ENCODE measurements at regions of chr2 and their contacts with region 1.

Region 1: GRCh38 chr2:134918526-134919340 is at the start of gene CCNT2:
- H3K4me3 Mint-ChIP-seq: peak within 1 kb of the TSS; percentile 98
- H3K27ac Mint-ChIP-seq: peak within 1 kb of the TSS; percentile 99
- H3K4me1 Mint-ChIP-seq: peaks cover 18% of the 10 kb centered on the region
- H3K27me3 Mint-ChIP-seq: no peaks in the 10 kb centered on the region

Region 2: GRCh38 chr2:134739879-134740301 is 178.8 kb before region 1 on chr2:
- intact Hi-C with region 1: loop called (anchors 10 kb)
- H3K4me3 Mint-ChIP-seq: no peak overlapping the region
- H3K27ac Mint-ChIP-seq: peak overlapping the region; percentile 65
- H3K4me1 Mint-ChIP-seq: peaks cover 59% of the 10 kb centered on the region
- H3K27me3 Mint-ChIP-seq: peaks cover 18% of the 10 kb centered on the region

Region 3: GRCh38 chr2:134943540-134943939 is 24.8 kb after region 1 on chr2:
- intact Hi-C with region 1: loop called (anchors 2 kb)
- H3K4me3 Mint-ChIP-seq: no peak overlapping the region
- H3K27ac Mint-ChIP-seq: peak overlapping the region; percentile 79
- H3K4me1 Mint-ChIP-seq: peaks cover 19% of the 10 kb centered on the region
- H3K27me3 Mint-ChIP-seq: no peaks in the 10 kb centered on the region

Region 4: GRCh38 chr2:135052042-135052876 is 133.5 kb after region 1 on chr2 and contains the start of gene RAB3GAP1:
- intact Hi-C with region 1: loop called (anchors 10 kb)
- H3K4me3 Mint-ChIP-seq: peak within 1 kb of the TSS; percentile 96
- H3K27ac Mint-ChIP-seq: peak within 1 kb of the TSS; percentile 100
- H3K4me1 Mint-ChIP-seq: peaks cover 28% of the 10 kb centered on the region
- H3K27me3 Mint-ChIP-seq: no peaks in the 10 kb centered on the region

Region 5: DNA sequence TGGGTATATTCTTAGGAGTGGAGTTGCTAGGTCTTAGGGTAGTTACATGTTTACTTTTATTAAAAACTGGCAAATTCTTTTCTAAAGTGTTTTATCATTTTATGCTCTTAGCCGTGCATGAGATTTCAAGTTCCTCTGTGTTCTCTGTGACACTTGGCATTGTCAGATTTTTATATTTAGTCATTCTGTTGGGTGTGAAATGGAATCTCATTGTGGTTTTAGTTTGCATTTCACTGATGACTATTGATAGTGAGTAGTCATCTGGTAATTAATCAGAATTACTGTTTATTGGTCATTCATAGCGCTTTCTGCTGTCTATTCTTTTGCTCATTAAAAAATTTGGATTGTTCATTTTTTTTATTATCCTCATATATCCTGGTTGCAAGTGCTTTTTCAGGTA is 167.5 kb after region 1 on chr2:
- intact Hi-C with region 1: no loop called
- H3K4me3 Mint-ChIP-seq: no peak overlapping the region
- H3K27ac Mint-ChIP-seq: no peak overlapping the region
- H3K4me1 Mint-ChIP-seq: peaks cover 13% of the 10 kb centered on the region
- H3K27me3 Mint-ChIP-seq: no peaks in the 10 kb centered on the region

Region 6: DNA sequence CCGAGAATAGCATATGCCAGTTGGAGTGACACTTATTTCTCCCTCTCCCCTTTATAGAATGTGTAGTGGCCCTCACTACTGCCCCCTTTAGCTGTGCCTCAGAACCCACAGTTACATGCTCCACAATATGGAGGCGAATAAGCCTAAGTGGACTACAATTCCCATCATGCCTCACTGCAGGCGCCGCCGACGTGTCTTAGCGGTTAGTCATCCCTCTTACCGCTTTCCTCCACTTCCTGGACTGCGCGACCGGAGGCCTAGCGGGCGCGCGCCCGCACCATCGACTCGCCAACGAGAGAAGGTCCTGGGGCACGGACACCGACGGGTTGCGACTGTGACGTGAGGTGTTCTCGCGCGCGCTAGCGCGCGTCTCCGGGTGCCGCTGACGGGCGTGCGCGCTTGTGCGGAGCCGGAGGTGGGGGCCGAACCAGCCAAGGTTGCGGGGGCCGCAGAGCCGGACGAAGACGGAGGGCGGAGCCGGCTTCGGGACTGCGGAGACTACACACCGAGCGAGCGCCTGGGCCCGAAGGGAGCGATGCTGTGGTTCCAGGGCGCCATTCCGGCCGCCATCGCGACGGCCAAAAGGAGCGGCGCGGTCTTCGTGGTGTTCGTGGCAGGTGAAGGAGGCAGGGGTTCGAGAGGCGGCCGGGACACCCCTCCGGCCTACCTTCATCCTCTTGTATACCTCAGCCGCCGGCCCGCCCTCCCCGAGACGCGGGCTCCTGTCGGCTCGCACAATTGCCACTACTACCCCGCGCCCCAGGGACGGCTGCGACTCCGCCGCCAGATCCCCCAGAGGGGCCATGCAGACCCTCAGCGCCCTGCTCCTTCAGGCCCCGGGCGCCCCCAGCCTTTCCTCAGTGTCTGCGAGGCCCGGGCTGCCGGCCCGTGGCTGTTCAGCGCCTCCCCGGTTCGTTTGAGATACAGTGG is 822.9 kb after region 1 on chr2 and contains the start of gene UBXN4:
- intact Hi-C with region 1: loop called (anchors 5 kb)
- H3K4me3 Mint-ChIP-seq: peak within 1 kb of the TSS; percentile 94
- H3K27ac Mint-ChIP-seq: peak within 1 kb of the TSS; percentile 95
- H3K4me1 Mint-ChIP-seq: peaks cover 18% of the 10 kb centered on the region
- H3K27me3 Mint-ChIP-seq: no peaks in the 10 kb centered on the region

Measured in dendritic cell treated with granulocyte-macrophage colony-stimulating factor and Interleukin-4, amounts not matched to agents 40 ng/mL and 50 ng/mL, for 4 days (primary cell).